PC-3 (cell line): ENCODE measurements at regions of chr12 and their contacts with region 1.

Region 1: DNA sequence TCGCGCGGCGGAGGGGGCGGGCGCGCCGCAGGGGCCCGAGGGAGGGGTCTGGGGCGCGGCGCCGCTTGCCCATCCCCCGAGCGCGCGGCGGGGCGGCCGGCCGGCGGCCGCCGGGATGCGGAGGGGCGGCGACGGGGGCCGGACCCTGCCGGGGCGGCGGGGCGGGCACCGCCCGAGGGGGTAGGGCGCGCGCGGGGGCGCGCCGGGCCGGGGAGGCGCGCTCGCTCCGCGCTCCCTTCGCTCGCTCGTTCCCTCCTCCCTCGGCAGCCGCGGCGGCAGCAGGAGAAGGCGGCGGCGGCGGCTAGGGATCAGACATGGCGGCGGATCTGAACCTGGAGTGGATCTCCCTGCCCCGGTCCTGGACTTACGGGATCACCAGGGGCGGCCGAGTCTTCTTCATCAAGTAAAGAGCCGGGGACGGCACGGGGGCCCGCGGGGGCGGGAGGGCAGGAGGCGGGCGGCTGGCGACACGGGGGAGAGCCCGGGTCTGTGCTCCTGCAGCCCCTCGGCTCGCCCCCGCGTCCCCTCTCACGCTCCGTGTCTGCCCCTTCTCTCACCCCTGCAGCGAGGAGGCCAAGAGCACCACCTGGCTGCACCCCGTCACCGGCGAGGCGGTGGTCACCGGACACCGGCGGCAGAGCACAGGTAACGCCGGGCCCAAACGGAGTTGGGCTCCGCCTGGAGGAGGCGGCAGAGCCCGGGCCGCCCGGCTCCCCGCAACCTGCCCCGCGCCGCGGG is at the start of gene PLEKHA5:
- DNase-seq: peak; percentile 64
- ATAC-seq: peak; percentile 54
- H3K4me3 ChIP-seq: peak within 1 kb of the TSS; percentile 97
- H3K27ac ChIP-seq: peak within 1 kb of the TSS; percentile 59
- H3K4me1 ChIP-seq: peaks cover 20% of the 10 kb centered on the region
- H3K27me3 ChIP-seq: no peaks in the 10 kb centered on the region
- CTCF ChIP-seq: no peak; the same call in 1 of the 2 replicates
- total RNA-seq, gene PLEKHA5: 16.7 and 18.4 TPM in 2 replicates

Region 2: GRCh38 chr12:19005257-19005801 is 124.3 kb before region 1 on chr12:
- CTCF ChIA-PET with region 1: no interaction called
- POLR2A ChIA-PET with region 1: no interaction called
- intact Hi-C with region 1: loop called (anchors 5 kb)
- DNase-seq: no peak
- ATAC-seq: no peak
- H3K4me3 ChIP-seq: no peak overlapping the region
- H3K27ac ChIP-seq: no peak overlapping the region
- H3K4me1 ChIP-seq: peaks cover 8% of the 10 kb centered on the region
- H3K27me3 ChIP-seq: no peaks in the 10 kb centered on the region
- CTCF ChIP-seq: no peak

Region 3: GRCh38 chr12:19095756-19096480 is 33.7 kb before region 1 on chr12:
- CTCF ChIA-PET with region 1: interaction called, 10 read pairs
- POLR2A ChIA-PET with region 1: no interaction called
- intact Hi-C with region 1: no loop called
- DNase-seq: peak; percentile 62
- ATAC-seq: peak; percentile 43
- H3K4me3 ChIP-seq: no peak overlapping the region
- H3K27ac ChIP-seq: peak overlapping the region; percentile 45; the same call in 1 of the 2 replicates
- H3K4me1 ChIP-seq: peaks cover 14% of the 10 kb centered on the region
- H3K27me3 ChIP-seq: no peaks in the 10 kb centered on the region
- CTCF ChIP-seq: no peak

Region 4: DNA sequence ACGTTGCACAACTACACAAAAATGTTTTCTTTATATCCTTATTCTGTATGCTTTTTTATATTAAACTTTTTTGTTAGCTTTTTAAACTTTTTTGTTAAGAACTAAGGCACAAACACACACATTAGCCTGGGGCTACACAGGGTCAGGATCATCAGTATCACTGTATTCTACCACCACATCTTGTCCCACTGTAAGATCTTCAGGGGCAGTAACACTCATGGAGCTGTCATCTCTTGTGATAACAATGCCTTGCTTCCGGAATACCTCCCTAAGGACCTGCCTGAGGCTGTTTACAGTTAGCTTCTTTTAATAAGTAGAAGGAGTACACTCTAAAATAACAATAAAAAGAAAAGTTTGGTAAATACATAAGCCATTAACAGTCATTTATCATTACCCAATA is 42.1 kb after region 1 on chr12:
- CTCF ChIA-PET with region 1: no interaction called
- POLR2A ChIA-PET with region 1: interaction called, 3 read pairs
- intact Hi-C with region 1: loop called (anchors 5 kb)
- DNase-seq: peak; percentile 45
- ATAC-seq: peak; percentile 24; the same call in 1 of the 2 replicates
- H3K4me3 ChIP-seq: no peak overlapping the region
- H3K27ac ChIP-seq: no peak overlapping the region
- H3K4me1 ChIP-seq: no peaks in the 10 kb centered on the region
- H3K27me3 ChIP-seq: no peaks in the 10 kb centered on the region
- CTCF ChIP-seq: no peak